Psoas muscle (tissue), 8 donors: ENCODE measurements at regions of chr1 and their contacts with region 1.

Region 1: DNA sequence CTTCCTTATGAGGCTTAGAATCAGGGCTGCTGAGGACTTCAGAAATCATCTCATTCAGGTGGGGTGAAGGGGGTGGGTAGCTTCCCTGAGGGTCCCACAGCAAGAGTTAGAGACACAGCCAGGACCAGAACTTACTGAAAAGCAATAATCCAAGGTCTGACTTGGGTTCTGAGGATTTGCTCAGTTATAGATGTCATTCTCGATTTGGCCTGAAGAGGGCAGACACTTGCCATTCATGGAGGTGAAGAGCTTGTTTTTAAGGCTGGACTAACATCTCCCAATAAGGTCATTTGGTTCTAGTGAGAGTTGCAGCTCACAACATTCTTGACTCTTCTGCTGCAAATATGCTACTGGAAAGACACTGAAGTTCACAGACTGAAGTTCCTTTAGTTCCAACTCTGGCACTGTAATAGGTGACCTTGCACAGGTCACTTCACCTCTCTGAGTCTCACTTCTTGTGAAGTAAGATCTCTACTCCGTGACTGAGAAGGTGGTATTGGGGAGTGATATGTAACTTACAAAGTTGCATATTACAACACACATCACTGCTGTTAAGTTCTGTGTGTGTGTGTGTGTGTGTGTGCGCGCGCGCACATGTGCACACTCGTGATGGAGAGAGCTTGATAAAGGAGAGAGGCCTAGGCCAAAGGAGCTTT is 69.8 kb upstream of the DIRAS3 start:
- DNase-seq: no peak
- ATAC-seq: peak; percentile 69 to 87 (median 79)
- H3K4me3 ChIP-seq: no peak overlapping the region
- H3K27ac ChIP-seq: no peak overlapping the region
- H3K4me1 ChIP-seq: peaks cover 3% of the 10 kb centered on the region
- H3K27me3 ChIP-seq: no peaks in the 10 kb centered on the region
- CTCF ChIP-seq: peak; percentile 94

Region 2: DNA sequence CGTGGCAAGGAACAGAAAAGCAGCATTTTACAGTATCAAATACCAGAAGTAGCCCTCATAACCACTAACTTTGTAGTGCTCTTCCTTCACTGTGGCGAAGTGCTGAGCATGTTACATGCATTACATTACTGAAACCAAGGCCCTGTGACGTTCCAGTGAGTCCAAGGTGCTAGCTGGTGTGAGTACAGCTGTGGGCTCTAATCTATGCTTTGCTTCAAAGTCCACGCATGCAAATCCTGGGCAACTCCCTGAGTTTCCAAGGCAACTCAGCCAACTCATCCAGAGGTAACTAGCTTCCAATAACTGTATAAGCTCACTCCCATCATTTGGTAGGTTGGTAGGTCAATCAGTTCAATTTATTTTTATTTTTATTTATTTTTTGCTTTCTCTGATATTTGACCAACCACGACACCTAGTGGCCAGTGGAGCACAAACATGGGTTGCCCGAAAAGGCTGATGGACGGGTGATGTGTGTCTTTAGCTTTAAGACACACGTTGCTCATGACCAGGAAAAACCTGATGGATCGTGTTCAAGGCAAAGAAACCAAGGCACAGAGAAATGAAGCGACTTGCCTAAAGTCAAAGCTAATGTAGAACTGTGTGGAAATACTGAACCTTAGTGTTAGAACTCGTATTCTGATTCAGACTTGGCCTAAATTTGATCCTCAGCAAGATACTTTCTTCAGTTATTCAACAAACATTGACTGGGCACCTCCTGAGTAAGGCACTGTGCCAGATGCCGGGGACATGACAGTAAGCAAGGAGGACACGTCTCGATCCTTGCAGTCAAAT is 360.0 kb before region 1 on chr1:
- intact Hi-C with region 1: loop called in 1 of 2 experiments (anchors 10 kb)
- DNase-seq: peak; percentile 41 to 62
- ATAC-seq: peak; percentile 84 to 91 (median 86)
- H3K4me3 ChIP-seq: no peak overlapping the region
- H3K27ac ChIP-seq: peak overlapping the region; percentile 66
- H3K4me1 ChIP-seq: peaks cover 21% of the 10 kb centered on the region
- H3K27me3 ChIP-seq: no peaks in the 10 kb centered on the region
- CTCF ChIP-seq: peak; percentile 90

Region 3: DNA sequence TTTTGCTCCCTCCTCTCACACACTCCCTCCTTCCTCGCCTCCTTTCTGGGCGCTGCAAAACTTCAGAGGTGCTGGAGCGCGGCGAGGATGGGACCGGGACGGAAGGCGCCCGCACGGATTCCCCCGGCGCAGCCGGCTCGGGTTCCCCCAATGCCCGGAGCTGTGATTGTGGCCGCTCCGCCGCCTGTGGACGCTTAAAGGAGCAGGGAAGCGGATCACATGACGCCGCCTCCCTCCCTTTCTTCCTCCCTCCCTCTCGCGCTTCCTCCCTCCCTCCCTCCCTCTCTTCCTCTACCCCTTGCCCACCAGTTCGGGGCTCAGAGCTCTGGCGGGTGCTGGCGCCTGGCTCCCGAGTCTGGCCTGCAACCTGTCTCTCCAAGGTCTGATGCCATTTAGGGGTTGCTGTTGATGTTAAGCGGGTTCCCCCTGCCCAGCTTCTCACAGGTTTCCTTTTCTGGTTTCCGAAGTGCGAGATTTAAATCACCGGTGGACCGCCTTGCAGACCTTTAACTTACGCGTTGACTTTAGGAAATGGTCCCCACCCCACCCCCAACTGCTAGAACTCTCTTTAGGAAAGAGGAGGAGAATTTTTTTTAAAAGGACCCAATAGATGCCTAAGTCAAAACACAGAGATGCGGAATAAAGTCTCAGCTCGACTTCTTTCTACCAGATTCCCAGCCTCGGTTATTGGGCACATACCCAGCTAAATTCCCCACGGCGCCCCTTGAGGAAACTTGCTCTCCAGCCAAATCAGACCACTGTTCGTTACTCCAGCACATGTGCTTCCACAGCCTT is 112.3 kb after region 1 on chr1 and contains the start of gene WLS:
- intact Hi-C with region 1: loop called (anchors 2 to 5 kb)
- DNase-seq: peak; percentile 76 to 88
- ATAC-seq: peak; percentile 84 to 93 (median 90)
- H3K4me3 ChIP-seq: peak within 1 kb of the TSS; percentile 82
- H3K27ac ChIP-seq: peak within 1 kb of the TSS; percentile 72
- H3K4me1 ChIP-seq: peaks cover 8% of the 10 kb centered on the region
- H3K27me3 ChIP-seq: no peaks in the 10 kb centered on the region
- CTCF ChIP-seq: peak; percentile 10
- total RNA-seq, gene WLS: 15.2 to 32.3 (median 17.5) TPM

Region 4: DNA sequence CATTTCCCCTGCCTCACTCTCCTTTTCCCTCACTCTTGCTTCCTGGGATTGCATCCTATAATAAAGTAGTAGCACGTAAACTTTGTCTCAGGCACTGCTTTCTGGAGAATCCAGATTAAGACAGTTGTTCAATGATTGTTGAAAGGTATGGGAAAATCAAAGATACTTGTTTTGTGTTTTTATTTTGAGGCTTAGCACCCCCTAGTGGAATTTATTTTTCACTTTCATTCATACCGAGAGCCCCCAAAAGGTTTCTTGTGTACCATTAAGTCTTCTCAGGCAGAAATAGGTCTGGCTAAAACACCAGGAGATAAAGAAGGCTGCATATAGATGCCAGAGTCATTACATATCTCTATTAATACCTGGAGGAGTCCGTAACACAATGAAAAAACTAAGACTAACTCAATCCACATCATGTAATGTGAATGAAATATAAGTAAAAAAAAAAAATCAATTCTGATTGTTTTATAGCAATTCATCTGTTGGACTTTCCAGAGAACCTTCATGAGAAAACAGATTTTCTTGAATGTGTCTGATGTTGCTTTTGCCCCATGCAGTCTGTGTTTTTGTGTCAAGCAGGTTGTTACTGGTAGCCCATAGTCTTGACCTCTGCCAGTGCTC is 226.0 kb after region 1 on chr1:
- intact Hi-C with region 1: loop called (anchors 2 kb)
- DNase-seq: no peak
- ATAC-seq: peak in 1 of 4 donors; percentile 51
- H3K4me3 ChIP-seq: no peak overlapping the region
- H3K27ac ChIP-seq: no peak overlapping the region
- H3K4me1 ChIP-seq: no peaks in the 10 kb centered on the region
- H3K27me3 ChIP-seq: no peaks in the 10 kb centered on the region
- CTCF ChIP-seq: peak; percentile 54

Region 5: DNA sequence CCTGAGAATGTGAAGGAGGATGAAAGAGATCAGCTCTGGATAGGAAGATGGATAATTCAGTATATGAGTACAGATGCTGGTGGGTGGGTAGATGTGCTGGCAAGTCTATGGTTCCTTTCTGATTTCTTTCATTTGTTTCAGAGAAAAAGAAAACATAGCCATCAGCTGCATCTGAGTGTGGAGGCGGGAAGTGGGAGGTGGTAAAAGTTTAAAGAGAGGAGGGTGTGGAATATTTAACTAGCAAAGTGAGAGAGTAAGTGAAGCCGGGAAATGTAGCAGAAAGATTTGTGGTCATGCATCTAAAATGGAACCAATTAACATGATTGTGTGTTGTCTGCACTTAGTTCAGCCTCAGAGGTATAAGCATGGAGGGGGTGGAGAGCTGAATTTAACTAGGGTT is 313.1 kb after region 1 on chr1:
- intact Hi-C with region 1: loop called in 1 of 2 experiments (anchors 2 kb)
- DNase-seq: no peak
- ATAC-seq: no peak
- H3K4me3 ChIP-seq: no peak overlapping the region
- H3K27ac ChIP-seq: no peak overlapping the region
- H3K4me1 ChIP-seq: no peaks in the 10 kb centered on the region
- H3K27me3 ChIP-seq: no peaks in the 10 kb centered on the region
- CTCF ChIP-seq: no peak